ENCODE measurements at regions of chr19 and their contacts with region 1.

Region 1: GRCh38 chr19:40165362-40165937 is 25.8 kb upstream of the MAP3K10 start:
- DNase-seq: peak; percentile 99
- ATAC-seq: peak; percentile 76
- H3K4me3 ChIP-seq: peak overlapping the region in 1 of 2 experiments; percentile 0; a peak in 1 of 4 replicates
- H3K27ac ChIP-seq: 0 out of 2 replicates have a peak overlapping the region, but pooled peaks have one; percentile 0
- H3K4me1 ChIP-seq: peaks cover 15% of the 10 kb centered on the region
- H3K27me3 ChIP-seq: no peaks in the 10 kb centered on the region
- CTCF ChIP-seq: no peak

Region 2: GRCh38 chr19:39444571-39445264 is 720.7 kb before region 1 on chr19:
- CTCF ChIA-PET with region 1: no interaction called
- POLR2A ChIA-PET with region 1: no interaction called
- in situ Hi-C with region 1: no loop called
- intact Hi-C with region 1: no loop called
- DNase-seq: no peak
- ATAC-seq: peak; percentile 7
- H3K4me3 ChIP-seq: peak overlapping the region; percentile 34 to 56
- H3K27ac ChIP-seq: peak overlapping the region; percentile 85
- H3K4me1 ChIP-seq: peaks cover 40% of the 10 kb centered on the region
- H3K27me3 ChIP-seq: no peaks in the 10 kb centered on the region
- CTCF ChIP-seq: no peak

Region 3: GRCh38 chr19:39858541-39858940 is 306.9 kb before region 1 on chr19:
- CTCF ChIA-PET with region 1: no interaction called
- POLR2A ChIA-PET with region 1: interaction called, 13 read pairs
- in situ Hi-C with region 1: no loop called
- intact Hi-C with region 1: no loop called
- DNase-seq: no peak
- ATAC-seq: peak; percentile 13; the same call in 1 of the 2 replicates
- H3K4me3 ChIP-seq: no peak overlapping the region
- H3K27ac ChIP-seq: no peak overlapping the region
- H3K4me1 ChIP-seq: peaks cover 4% of the 10 kb centered on the region
- H3K27me3 ChIP-seq: no peaks in the 10 kb centered on the region
- CTCF ChIP-seq: no peak

Region 4: GRCh38 chr19:40013991-40014390 is 151.5 kb before region 1 on chr19:
- CTCF ChIA-PET with region 1: interaction called, 4 read pairs
- POLR2A ChIA-PET with region 1: interaction called, 19 read pairs
- in situ Hi-C with region 1: no loop called
- intact Hi-C with region 1: no loop called
- DNase-seq: no peak
- ATAC-seq: no peak
- H3K4me3 ChIP-seq: no peak overlapping the region
- H3K27ac ChIP-seq: no peak overlapping the region
- H3K4me1 ChIP-seq: no peaks in the 10 kb centered on the region
- H3K27me3 ChIP-seq: no peaks in the 10 kb centered on the region
- CTCF ChIP-seq: no peak

Region 5: DNA sequence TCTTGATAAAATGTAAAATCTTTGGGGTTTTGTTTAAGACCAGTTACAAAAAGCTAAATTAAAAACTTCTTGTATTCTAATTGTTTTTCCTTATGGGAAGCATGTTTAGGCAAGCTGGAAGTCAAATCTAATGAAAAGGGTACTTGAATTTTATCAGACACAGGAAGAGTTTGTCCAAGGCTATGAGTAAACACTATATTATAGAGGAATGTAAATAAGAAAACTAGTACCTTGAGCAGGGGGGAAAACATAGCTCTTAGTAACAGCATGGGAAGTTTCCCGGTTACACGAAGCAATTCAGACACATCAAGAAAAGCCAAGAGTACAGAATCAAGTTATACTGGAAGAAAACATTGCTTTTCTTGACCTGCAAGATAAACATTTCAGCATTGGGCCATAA is 54.9 kb before region 1 on chr19:
- CTCF ChIA-PET with region 1: interaction called, 14 read pairs
- POLR2A ChIA-PET with region 1: no interaction called
- in situ Hi-C with region 1: no loop called
- intact Hi-C with region 1: no loop called
- DNase-seq: no peak
- ATAC-seq: peak; percentile 41
- H3K4me3 ChIP-seq: no peak overlapping the region
- H3K27ac ChIP-seq: no peak overlapping the region
- H3K4me1 ChIP-seq: no peaks in the 10 kb centered on the region
- H3K27me3 ChIP-seq: no peaks in the 10 kb centered on the region; the same call in 1 of the 2 replicates
- CTCF ChIP-seq: no peak

Region 6: GRCh38 chr19:40190891-40191835 is 25.7 kb after region 1 on chr19 and contains the start of gene MAP3K10:
- CTCF ChIA-PET with region 1: interaction called, 35 read pairs
- POLR2A ChIA-PET with region 1: interaction called, 6 read pairs
- in situ Hi-C with region 1: no loop called
- intact Hi-C with region 1: loop called (anchors 2 kb)
- DNase-seq: peak; percentile 99
- ATAC-seq: peak; percentile 97
- H3K4me3 ChIP-seq: peak within 1 kb of the TSS; percentile 36 to 57
- H3K27ac ChIP-seq: peak within 1 kb of the TSS; percentile 49
- H3K4me1 ChIP-seq: peaks cover 23% of the 10 kb centered on the region
- H3K27me3 ChIP-seq: peaks cover 9% of the 10 kb centered on the region
- CTCF ChIP-seq: no peak
- total RNA-seq, gene MAP3K10: 255 TPM

Region 7: DNA sequence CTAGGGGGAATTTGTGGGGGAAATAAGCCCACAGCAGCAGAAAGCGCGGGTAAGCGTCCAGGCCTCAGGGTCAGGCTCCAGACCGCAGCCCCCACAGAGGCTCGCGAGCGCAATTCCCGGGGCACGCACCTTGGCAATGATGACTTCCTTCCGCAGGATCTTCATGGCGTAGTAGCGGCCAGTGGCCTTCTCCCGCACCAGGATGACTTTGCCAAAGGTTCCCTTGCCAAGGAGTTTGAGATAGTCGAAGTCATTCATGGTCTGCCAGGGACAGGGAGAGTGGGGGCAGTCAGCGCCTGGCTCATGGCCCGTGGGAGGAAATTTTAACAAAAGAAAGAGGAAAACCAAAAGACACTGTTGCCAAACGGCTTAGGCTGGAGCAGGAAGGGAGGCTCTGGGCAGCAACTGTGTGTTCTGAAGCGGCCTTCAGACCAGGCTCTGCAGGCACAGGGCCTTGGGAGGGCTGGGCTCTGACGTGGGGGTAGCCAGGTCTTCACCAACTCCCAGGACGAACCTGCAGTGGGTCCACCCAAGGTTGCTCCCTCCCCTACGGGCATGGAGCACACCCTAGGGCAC is 76.4 kb after region 1 on chr19:
- CTCF ChIA-PET with region 1: interaction called, 10 read pairs
- POLR2A ChIA-PET with region 1: no interaction called
- in situ Hi-C with region 1: no loop called
- intact Hi-C with region 1: no loop called
- DNase-seq: no peak
- ATAC-seq: peak; percentile 5; the same call in 1 of the 2 replicates
- H3K4me3 ChIP-seq: no peak overlapping the region
- H3K27ac ChIP-seq: no peak overlapping the region
- H3K4me1 ChIP-seq: no peaks in the 10 kb centered on the region
- H3K27me3 ChIP-seq: no peaks in the 10 kb centered on the region
- CTCF ChIP-seq: no peak

Region 8: DNA sequence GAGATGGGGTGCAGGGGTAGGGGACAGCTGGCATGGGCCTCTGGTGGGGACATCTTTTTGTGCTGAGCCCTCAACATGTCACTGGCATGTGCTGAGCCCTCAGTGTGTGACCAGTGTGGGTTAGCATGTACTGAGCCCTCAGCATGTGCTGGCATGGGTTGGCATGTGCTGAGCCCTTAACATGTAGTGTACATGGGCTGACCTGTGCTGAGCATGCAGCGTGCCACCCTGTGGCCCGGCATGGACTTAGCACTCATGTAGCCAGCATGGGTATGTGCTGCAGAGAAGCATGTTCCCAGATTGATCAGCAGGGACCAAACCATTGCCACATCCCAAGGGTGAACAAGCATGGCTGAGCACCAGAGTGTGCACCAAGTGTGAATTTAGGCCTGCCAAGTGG is 213.1 kb after region 1 on chr19:
- CTCF ChIA-PET with region 1: no interaction called
- POLR2A ChIA-PET with region 1: no interaction called
- in situ Hi-C with region 1: no loop called
- intact Hi-C with region 1: no loop called
- DNase-seq: no peak
- ATAC-seq: no peak
- H3K4me3 ChIP-seq: no peak overlapping the region
- H3K27ac ChIP-seq: no peak overlapping the region
- H3K4me1 ChIP-seq: no peaks in the 10 kb centered on the region
- H3K27me3 ChIP-seq: no peaks in the 10 kb centered on the region
- CTCF ChIP-seq: no peak